Sigmoid colon (tissue), 7 donors: ENCODE measurements at regions of chr12 and their contacts with region 1.

Region 1: GRCh38 chr12:124767066-124767821 is 96.4 kb downstream of the SCARB1 start:
- DNase-seq: peak; percentile 90
- H3K4me3 ChIP-seq: no peak overlapping the region
- H3K27ac ChIP-seq: peak overlapping the region; percentile 79 to 90 (median 82)
- H3K4me1 ChIP-seq: peaks cover 0 to 49% (median 44%) of the 10 kb centered on the region in 4 donors
- H3K27me3 ChIP-seq: no peaks in the 10 kb centered on the region
- CTCF ChIP-seq: peak; percentile 97 to 99 (median 99)
- EP300 ChIP-seq: no peak
- POLR2A ChIP-seq: no peak

Region 2: DNA sequence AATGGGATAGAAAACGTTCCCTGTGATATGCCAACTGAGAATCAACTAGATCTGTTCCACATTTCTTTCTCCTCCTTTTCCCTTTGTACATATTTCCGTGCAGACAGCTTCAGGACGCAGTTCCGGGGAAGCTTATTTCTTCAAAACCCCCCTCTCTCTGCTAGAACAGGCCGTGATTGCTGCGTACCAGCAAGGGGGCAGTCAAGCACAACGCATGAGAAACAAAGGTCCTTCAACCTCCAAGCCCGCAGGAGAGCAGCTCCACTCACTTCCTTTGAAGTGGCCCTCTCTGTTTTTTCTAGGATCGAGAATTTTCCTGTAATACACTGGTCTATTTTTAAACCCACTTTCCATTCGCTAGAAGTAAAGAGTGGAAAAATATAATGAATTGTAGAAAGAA is 713.4 kb before region 1 on chr12:
- intact Hi-C with region 1: loop called (anchors 5 kb)
- DNase-seq: peak; percentile 84
- H3K4me3 ChIP-seq: no peak overlapping the region
- H3K27ac ChIP-seq: no peak overlapping the region
- H3K4me1 ChIP-seq: peaks cover 0 to 4% (median 0%) of the 10 kb centered on the region in 4 donors
- H3K27me3 ChIP-seq: no peaks in the 10 kb centered on the region
- CTCF ChIP-seq: peak; percentile 63 to 65 (median 64)
- EP300 ChIP-seq: no peak
- POLR2A ChIP-seq: no peak

Region 3: DNA sequence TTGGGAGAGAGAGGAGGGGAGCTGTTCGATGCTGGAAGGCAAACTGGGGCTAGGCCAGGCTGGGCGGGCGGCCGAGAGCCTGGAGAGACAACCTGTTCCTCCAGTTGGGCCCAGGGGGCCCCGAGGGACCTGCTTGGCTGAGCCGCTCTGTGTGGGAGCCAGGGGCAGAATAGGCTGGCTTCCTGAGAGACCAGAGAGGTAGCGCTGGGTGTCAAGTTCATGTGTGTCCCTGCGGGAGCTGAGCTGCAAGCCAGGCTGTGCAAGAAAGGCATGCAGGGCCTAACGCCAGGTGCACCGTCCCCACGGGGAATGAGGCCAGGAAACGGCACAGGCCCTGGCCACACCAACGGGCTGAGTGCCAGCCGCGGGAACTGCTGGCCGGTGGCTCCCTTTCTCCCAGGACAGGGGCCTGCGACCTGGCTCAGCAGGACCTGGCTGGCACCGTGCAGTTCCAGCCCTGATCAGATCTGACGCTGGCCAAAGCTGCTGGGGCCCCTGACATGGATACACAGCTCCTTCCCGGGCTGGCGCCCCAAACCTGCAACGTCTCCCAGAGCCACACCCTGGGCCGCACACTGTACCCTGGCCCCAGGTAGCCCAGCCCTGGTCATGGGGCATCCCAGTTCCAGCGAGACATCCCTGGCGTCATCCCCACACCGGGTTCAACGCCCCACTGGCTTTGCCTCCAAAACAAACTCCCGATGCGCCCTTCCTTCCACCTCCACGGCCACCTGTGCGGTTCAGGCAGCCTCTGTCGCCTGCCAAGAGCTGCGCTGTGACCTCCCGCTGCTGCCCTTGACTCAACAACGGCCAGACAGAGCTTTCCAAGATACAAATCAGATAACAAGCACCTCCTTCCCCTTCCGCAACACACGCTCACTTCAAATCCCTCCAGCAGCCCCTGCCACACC is 407.3 kb before region 1 on chr12:
- intact Hi-C with region 1: loop called (anchors 2 kb)
- DNase-seq: peak; percentile 98
- H3K4me3 ChIP-seq: no peak overlapping the region
- H3K27ac ChIP-seq: peak overlapping the region; percentile 70 to 79 (median 75)
- H3K4me1 ChIP-seq: peaks cover 0 to 43% (median 29%) of the 10 kb centered on the region in 4 donors
- H3K27me3 ChIP-seq: no peaks in the 10 kb centered on the region
- CTCF ChIP-seq: no peak
- EP300 ChIP-seq: peak in 2 of 4 donors; percentile 16 to 48
- POLR2A ChIP-seq: no peak

Region 4: DNA sequence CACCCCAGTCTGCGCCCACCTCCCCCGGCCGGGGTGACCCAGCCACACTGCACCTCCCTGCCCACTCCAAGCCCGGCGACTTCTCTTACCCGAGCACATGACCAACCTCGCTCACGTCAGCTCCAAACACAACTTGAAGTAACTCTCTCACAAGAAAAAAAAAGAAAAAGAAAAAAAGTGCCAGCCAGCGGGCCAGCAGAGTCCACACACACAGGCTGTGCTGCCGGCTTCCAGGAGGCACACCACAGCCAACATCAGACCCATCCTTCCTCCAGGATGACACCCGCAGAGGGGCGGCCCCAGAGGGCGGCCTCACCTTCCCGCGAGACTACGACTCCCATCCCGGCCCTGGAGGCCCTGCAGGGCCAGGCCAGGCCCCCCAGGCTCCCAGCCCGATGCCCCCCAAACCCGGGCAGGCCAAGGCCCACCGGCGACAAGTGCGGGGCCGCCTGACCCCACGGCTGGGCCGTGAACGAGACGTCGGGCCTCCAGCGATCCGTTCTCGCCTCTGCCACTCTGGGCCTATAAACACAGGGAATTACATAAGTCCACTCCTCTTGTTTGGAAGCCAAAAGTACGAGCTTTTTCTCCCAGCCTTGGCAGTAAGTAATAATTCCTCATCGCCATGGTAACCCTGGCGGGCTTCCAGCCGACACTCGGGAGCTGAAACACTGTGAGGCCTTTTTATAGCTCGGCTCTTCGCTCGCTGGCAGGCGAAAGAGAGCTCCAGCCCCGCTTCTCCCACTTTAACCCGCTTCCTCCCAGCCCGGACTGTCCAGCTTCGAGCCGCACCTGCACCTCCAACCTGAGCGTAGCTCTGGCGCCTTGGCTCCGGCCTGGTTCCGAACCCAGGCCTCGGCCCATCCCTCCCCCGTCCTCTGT is 249.0 kb before region 1 on chr12:
- intact Hi-C with region 1: loop called (anchors 5 kb)
- DNase-seq: peak; percentile 100
- H3K4me3 ChIP-seq: peak overlapping the region; percentile 20 to 60 (median 54)
- H3K27ac ChIP-seq: peak overlapping the region; percentile 96 to 99 (median 98)
- H3K4me1 ChIP-seq: peaks cover 0 to 96% (median 91%) of the 10 kb centered on the region in 4 donors
- H3K27me3 ChIP-seq: no peaks in the 10 kb centered on the region
- CTCF ChIP-seq: no peak
- EP300 ChIP-seq: peak in 1 of 4 donors; percentile 78
- POLR2A ChIP-seq: peak; percentile 28 to 45

Region 5: DNA sequence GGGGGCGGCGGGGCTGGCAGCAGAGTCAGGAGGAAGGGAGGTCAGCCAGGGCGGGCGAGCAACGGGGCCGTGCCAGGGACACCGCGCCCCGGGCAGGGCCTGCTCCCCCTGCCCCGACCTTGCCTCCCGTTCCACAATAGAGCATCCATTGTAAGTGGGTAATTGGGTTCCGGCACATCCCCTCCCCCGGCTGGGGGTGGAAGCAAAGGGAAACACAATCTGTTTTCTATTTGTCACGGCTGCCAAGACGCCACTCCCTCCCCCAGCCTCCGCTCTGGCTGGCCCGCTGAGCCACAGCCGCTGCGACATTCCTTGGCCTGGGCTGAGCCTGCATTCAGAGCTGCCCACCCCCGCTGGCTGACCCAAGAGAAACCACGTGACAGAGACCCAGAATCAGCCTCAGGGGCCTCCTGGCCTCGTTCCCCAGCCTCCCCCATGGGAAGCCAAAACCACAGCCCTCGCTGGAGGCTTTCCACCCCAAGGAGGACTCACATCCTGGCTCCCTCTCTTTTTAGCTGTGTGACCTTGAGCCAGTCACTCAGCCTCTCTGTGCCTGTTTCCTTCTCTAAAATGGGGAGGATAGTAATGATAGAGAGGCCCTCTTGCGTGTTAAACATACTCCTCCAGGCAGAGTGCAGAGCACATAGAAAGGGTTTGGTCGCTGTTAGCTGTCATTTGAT is 21.2 kb before region 1 on chr12:
- intact Hi-C with region 1: loop called (anchors 1 kb)
- DNase-seq: peak; percentile 98
- H3K4me3 ChIP-seq: peak overlapping the region in 2 of 4 donors; percentile 23 to 30
- H3K27ac ChIP-seq: peak overlapping the region; percentile 87 to 95 (median 92)
- H3K4me1 ChIP-seq: peaks cover 0 to 76% (median 70%) of the 10 kb centered on the region in 4 donors
- H3K27me3 ChIP-seq: no peaks in the 10 kb centered on the region
- CTCF ChIP-seq: no peak
- EP300 ChIP-seq: peak in 3 of 4 donors; percentile 66 to 84 (median 73)
- POLR2A ChIP-seq: no peak